ENCODE measurements at regions of chr11 and their contacts with region 1.

Region 1: GRCh38 chr11:126024123-126024522 is 38.5 kb downstream of the CDON start:
- DNase-seq: peak; percentile 72
- H3K4me3 ChIP-seq: no peak overlapping the region
- H3K27ac ChIP-seq: peak overlapping the region; percentile 61 to 81 (median 79)
- H3K4me1 ChIP-seq: peaks cover 0 to 81% (median 57%) of the 10 kb centered on the region in 4 donors
- H3K27me3 ChIP-seq: no peaks in the 10 kb centered on the region
- CTCF ChIP-seq: no peak
- EP300 ChIP-seq: peak in 2 of 4 donors; percentile 70 to 85
- POLR2A ChIP-seq: no peak

Region 2: GRCh38 chr11:125950696-125951651 is 73.1 kb before region 1 on chr11:
- intact Hi-C with region 1: loop called (anchors 5 kb)
- DNase-seq: peak; percentile 96
- H3K4me3 ChIP-seq: no peak overlapping the region
- H3K27ac ChIP-seq: peak overlapping the region; percentile 32 to 78 (median 74)
- H3K4me1 ChIP-seq: peaks cover 2 to 36% (median 32%) of the 10 kb centered on the region in 4 donors
- H3K27me3 ChIP-seq: no peaks in the 10 kb centered on the region
- CTCF ChIP-seq: no peak
- EP300 ChIP-seq: peak in 3 of 4 donors; percentile 68 to 84 (median 77)
- POLR2A ChIP-seq: no peak

Region 3: DNA sequence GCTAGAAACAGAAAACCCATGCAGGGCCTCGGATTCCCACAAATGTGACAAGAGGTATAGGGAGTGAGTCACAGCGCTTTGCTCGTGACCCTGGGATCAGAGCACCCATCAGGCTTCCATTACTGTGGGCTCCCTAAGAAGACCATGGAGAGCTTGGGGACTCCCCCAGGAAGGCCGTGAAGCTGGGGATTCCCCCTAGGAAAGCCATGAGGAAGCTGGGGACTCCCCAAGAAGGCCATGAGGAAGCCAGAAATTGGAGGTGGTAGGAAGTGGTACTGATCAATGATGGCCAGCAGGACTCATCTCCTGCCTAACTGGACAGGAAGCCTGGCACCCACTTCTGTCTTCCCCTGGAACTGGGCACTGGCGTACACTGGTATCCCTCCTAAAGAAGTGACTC is 269.6 kb after region 1 on chr11:
- intact Hi-C with region 1: no loop called
- DNase-seq: no peak
- H3K4me3 ChIP-seq: no peak overlapping the region
- H3K27ac ChIP-seq: no peak overlapping the region
- H3K4me1 ChIP-seq: no peaks in the 10 kb centered on the region
- H3K27me3 ChIP-seq: no peaks in the 10 kb centered on the region
- CTCF ChIP-seq: no peak
- EP300 ChIP-seq: no peak
- POLR2A ChIP-seq: no peak

Region 4: GRCh38 chr11:126366065-126366785 is 342.1 kb after region 1 on chr11:
- intact Hi-C with region 1: no loop called
- DNase-seq: peak; percentile 63
- H3K4me3 ChIP-seq: no peak overlapping the region
- H3K27ac ChIP-seq: peak overlapping the region; percentile 6 to 54 (median 37)
- H3K4me1 ChIP-seq: peaks cover 0 to 27% (median 25%) of the 10 kb centered on the region in 4 donors
- H3K27me3 ChIP-seq: no peaks in the 10 kb centered on the region
- CTCF ChIP-seq: no peak
- EP300 ChIP-seq: no peak
- POLR2A ChIP-seq: no peak

Region 5: DNA sequence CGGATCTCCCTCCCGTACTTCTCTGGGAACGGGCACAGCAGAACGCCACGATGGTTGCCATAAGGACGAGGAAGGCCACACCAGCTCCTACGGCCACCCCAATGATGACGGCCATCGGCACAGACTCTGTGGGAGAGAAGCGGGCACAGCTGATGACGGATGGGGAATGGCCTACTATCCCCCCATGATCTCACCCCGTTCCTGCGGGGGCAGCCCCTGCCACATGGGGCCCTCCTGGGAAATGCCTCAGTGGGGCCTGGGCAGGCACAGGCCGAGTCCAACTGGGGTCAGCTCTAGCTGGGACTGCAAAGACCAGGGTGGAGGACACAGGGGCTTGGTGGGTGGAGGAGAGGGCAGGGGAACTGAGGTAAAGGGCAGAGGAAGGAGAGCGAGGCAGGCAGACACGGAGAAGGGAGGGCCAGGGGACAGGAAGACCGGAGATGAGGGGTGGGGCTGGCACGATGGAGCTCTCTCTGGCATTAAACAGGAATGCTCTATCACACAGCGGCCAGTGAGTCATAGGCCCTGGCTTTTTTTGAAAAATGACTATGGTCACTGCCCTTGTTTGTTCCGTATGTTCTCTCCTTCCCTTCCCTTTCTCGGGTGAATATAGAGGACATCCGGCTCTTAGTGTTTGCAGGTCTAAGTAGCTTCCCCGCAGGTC is 407.4 kb after region 1 on chr11:
- intact Hi-C with region 1: no loop called
- DNase-seq: peak; percentile 84
- H3K4me3 ChIP-seq: no peak overlapping the region
- H3K27ac ChIP-seq: peak overlapping the region; percentile 49 to 68 (median 64)
- H3K4me1 ChIP-seq: peaks cover 0 to 25% (median 21%) of the 10 kb centered on the region in 4 donors
- H3K27me3 ChIP-seq: no peaks in the 10 kb centered on the region
- CTCF ChIP-seq: no peak
- EP300 ChIP-seq: no peak
- POLR2A ChIP-seq: no peak

Measured in sigmoid colon (tissue), 7 donors.